ENCODE measurements at regions of chr18 and their contacts with region 1.

Region 1: GRCh38 chr18:8696749-8697211 is 8.6 kb upstream of the MTCL1 start:
- DNase-seq: peak; percentile 56
- H3K4me3 Mint-ChIP-seq: no peak overlapping the region
- H3K27ac Mint-ChIP-seq: no peak overlapping the region
- H3K4me1 Mint-ChIP-seq: no peaks in the 10 kb centered on the region
- H3K27me3 Mint-ChIP-seq: peaks cover 19% of the 10 kb centered on the region

Region 2: DNA sequence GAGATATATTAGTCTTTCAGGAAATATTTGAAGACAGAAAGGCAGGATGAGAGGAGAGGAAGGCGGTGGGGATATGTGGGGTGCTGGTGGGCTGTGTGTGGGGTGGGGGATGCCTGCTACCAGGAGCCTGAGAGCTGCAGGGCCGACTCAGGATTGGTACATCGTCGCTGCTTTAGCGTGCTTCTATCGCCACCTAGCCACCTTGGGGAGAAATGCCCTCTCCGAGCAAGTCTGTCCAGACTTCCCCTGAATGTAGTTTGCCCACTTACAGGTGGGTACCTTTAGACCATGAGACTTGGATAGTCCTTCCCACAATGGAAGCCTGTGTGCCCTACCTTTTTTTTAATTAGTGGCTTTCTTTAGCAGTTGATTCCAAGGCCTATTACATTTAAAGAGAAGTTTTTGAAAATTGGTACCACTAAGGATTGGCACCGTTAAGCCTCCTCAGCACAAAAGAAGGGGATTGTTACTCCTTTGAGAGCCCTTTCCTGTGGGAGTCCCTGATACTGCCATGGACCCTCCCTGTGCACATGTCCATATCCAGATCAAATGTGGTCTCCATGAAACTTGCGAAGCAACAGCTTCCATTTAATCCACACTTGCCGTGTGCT is 291.6 kb after region 1 on chr18:
- intact Hi-C with region 1: loop called (anchors 1 kb)
- DNase-seq: peak; percentile 26
- H3K4me3 Mint-ChIP-seq: no peak overlapping the region
- H3K27ac Mint-ChIP-seq: no peak overlapping the region
- H3K4me1 Mint-ChIP-seq: no peaks in the 10 kb centered on the region
- H3K27me3 Mint-ChIP-seq: peaks cover 11% of the 10 kb centered on the region

Region 3: GRCh38 chr18:9147440-9148202 is 450.8 kb after region 1 on chr18:
- intact Hi-C with region 1: loop called (anchors 5 kb)
- DNase-seq: peak; percentile 23
- H3K4me3 Mint-ChIP-seq: peak overlapping the region; percentile 61
- H3K27ac Mint-ChIP-seq: peak overlapping the region; percentile 91
- H3K4me1 Mint-ChIP-seq: peaks cover 57% of the 10 kb centered on the region
- H3K27me3 Mint-ChIP-seq: no peaks in the 10 kb centered on the region

Measured in activated T-helper 2 cell treated with anti-CD3 and anti-CD28 coated beads, Interferon-gamma antibody, Interleukin-2, Interleukin-4, amounts not matched to agents 10 μg/mL and 5 μg/mL and 100 μg/mL, durations not matched to agents 14 hours and 24 hours and 36 hours (primary cell).